KBM-7 (cell line): ENCODE measurements at regions of chr7 and their contacts with region 1.

Region 1: DNA sequence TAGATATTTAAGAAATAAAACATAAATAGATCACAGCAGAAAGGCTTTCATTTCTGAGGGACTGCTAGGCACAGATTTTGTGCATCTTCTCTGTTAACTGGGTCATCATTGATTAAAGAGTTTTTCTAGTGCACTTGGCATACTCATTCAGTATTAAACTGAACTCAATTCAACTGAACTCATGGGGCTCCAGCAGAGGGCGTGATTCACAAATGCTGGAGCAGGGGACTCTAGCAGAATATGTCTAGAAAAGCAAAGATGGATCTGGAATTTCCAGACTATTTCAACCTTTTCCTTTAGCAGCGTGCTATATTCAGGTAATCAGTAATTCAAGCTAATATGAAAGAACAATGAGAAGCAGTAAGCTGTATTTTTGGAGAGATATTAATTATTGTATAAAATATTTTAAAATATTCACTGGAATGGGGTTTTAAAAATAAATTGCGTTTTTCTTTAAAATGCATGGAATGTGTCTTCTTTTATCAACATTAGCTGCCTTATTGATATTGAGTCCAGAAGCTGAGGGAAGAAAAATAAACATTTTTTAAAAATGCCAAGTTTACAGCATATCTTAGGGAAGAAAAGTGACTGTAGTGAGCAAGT is 296.8 kb upstream of the CACNA2D1 start:
- DNase-seq: peak; percentile 35

Region 2: GRCh38 chr7:82044497-82045080 is 695.8 kb before region 1 on chr7:
- in situ Hi-C with region 1: loop called (anchors 25 kb)
- DNase-seq: peak; percentile 52

Region 3: DNA sequence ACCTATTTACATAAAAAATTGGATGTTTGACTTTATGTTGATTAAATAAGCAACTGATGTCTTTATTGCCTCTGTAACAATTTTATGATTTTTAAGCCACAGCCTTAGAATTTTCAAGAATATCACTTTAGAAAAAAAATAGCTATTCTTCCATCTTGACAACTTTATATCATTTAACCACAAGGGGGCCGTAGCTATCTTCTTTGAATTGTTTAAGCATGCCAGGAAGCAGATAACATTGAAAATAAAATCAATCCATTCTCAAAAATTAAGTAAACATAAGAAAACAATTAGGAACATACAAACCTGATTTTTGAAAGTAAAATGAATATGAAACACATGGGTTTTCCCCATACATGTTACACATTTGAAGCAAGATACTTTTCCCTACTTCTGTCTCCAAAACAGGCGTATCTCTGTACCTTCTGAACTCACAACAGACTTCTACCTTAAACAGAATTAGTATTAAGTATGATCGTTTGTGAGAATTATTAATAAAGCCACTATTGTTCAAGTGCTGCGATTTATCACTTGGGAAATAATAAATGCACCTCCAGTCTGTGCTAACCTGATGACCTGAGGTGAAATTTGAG is 505.8 kb before region 1 on chr7:
- in situ Hi-C with region 1: loop called (anchors 25 kb)
- DNase-seq: peak; percentile 48